GM12878 (cell line): ENCODE measurements at regions of chr11 and their contacts with region 1.

Region 1: DNA sequence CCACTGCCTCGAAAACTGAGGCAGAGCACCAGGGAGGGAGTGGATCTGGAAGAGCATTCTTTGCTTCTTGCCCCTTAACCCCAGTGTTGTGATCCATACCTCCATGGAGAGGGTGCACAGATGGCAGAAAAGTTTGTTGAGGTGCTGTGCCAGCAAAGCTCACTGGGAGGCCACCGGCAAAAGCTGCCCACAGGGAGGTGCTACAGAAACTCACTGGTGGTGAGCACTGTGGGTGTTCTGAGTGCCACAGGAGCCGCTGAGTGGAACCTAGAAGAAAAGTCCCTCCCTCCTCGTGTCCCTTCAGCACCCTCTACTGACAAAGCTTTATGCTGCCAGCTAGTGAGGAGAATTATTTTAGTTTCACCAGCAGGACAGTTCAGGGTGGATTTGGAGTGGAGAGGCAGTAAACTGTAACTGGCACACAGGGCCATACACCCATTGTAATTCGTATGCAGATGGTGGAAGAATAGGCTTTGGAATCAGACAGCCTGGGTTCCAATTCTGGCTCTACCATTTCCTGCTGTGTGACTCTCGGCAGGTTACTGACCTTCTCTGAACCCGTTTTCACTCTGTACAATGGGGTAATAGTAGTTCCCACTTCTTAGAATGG is 84.6 kb downstream of the SWAP70 start:
- DNase-seq: peak; percentile 72
- ATAC-seq: peak; percentile 90
- H3K4me3 ChIP-seq: no peak overlapping the region
- H3K27ac ChIP-seq: no peak overlapping the region
- H3K4me1 ChIP-seq: peaks cover 42% of the 10 kb centered on the region
- H3K27me3 ChIP-seq: no peaks in the 10 kb centered on the region
- CTCF ChIP-seq: peak; percentile 83 to 92 (median 91)
- EP300 ChIP-seq: no peak; a peak in 1 of 4 replicates
- POLR2A ChIP-seq: no peak
- RAD21 ChIP-seq: peak; percentile 97

Region 2: DNA sequence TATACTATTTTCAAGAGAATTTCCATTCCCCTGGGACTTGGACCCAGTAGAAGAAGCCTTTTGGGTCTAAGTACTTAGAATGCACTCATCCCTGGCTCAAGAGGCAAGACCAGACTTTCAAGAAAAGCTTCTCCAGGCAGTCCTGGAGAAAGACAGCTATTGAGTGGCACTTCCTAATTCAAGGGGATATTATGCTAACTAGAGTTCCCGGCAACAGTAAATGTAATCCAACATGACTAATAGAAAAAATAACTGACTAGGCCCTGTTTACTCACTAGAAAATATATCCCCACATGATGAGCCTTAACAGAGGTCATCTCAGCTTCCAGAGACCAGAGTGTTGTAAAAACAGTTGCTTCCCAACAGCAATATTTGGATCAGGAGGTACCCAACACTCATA is 884.6 kb before region 1 on chr11:
- CTCF ChIA-PET with region 1: no interaction called
- POLR2A ChIA-PET with region 1: no interaction called
- RAD21 ChIA-PET with region 1: no interaction called
- SMC1A ChIA-PET with region 1: no interaction called
- in situ Hi-C with region 1: no loop called
- intact Hi-C with region 1: no loop called
- DNase-seq: no peak
- ATAC-seq: no peak
- H3K4me3 ChIP-seq: no peak overlapping the region
- H3K27ac ChIP-seq: no peak overlapping the region
- H3K4me1 ChIP-seq: no peaks in the 10 kb centered on the region
- H3K27me3 ChIP-seq: no peaks in the 10 kb centered on the region
- CTCF ChIP-seq: no peak
- EP300 ChIP-seq: no peak
- POLR2A ChIP-seq: no peak
- RAD21 ChIP-seq: no peak

Region 3: DNA sequence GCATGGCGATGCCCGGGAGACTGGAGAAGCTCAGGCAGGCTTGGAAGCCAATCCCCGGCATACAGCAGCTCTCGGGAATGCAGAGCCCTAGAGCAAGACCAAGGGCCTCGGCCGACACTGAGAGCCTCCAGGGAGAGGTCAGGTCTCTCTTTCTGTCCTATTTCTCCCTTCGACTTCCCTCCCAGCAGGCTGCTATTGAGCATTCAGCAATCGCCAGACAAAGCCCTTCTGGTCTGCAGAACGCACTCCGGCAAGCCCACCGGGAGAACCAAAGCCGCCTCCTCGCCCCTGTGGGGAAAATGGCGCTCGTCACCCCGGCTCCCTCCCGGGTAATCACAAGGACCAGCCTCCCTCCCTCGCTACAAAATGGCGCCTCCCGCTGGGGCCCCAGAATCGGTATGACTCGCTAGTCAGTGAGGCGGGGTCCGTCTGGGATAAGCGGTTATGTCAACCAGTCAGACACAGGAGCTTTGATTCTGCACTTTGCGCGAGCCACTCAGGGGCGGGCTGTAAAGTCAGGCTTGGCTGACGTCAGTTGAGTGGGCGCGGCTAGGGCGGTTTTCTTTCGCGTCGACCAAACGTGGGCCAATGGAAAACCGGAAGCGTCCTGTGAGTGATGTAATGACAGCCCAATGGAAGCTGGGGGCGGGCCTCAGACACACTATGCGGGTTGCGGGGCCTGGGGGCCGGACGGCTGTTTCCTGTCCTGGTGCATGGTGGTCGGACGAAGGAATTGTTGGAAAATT is 288.0 kb before region 1 on chr11 and contains the start of gene ZNF143:
- CTCF ChIA-PET with region 1: interaction called, 5 read pairs
- POLR2A ChIA-PET with region 1: no interaction called
- RAD21 ChIA-PET with region 1: interaction called, 4 read pairs
- SMC1A ChIA-PET with region 1: no interaction called
- in situ Hi-C with region 1: no loop called
- intact Hi-C with region 1: loop called (anchors 5 kb)
- DNase-seq: peak; percentile 99
- ATAC-seq: peak; percentile 88
- H3K4me3 ChIP-seq: peak within 1 kb of the TSS; percentile 98
- H3K27ac ChIP-seq: peak within 1 kb of the TSS; percentile 100
- H3K4me1 ChIP-seq: peaks cover 7% of the 10 kb centered on the region
- H3K27me3 ChIP-seq: no peaks in the 10 kb centered on the region
- CTCF ChIP-seq: no peak
- EP300 ChIP-seq: peak in 1 of 2 experiments; percentile 9; a peak in 1 of 4 replicates
- POLR2A ChIP-seq: peak; percentile 90
- RAD21 ChIP-seq: no peak
- polyA plus RNA-seq, gene ZNF143: 16.1 to 18.3 TPM

Region 4: DNA sequence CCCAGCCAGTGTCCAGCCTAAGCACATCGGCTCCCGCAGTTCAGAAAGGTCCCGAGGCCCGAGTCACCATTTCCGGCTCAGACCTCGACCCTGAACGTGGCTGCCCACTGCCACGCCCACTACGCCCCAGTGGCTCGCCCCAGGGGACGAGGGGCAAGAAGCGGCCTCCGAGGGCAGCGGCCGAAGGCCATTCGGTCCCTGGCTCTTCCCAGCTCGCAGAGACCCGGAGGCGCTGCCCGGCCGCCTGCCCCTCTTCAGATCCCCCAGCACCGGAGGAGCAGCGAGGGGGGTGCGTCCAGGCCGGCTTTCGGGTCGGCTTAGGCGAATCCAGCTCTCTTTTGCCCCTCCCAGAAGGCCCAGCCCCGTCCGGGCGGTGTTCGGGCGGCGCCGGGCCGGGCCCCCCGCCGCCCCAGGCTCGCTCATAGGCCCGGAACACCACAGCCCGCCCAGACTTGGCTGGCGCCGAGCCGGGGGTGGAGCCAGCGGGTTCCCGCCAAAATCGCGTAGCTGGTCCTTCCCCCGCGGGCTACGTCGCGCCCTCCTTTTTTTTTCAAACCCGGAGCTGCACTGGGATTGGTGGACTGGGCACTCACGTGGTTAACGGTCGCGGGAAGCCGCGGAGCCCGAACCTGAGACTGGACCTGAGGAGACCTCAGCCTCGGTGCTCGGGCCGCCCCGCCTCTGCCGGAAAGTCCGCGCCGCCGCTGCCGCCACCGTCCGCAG is 175.3 kb before region 1 on chr11 and contains the start of gene WEE1:
- CTCF ChIA-PET with region 1: interaction called, 24 read pairs
- POLR2A ChIA-PET with region 1: no interaction called
- RAD21 ChIA-PET with region 1: interaction called, 7 read pairs
- SMC1A ChIA-PET with region 1: interaction called, 30 read pairs
- in situ Hi-C with region 1: no loop called
- intact Hi-C with region 1: loop called (anchors 2 kb)
- DNase-seq: peak; percentile 86
- ATAC-seq: peak; percentile 94
- H3K4me3 ChIP-seq: peak within 1 kb of the TSS; percentile 90
- H3K27ac ChIP-seq: peak within 1 kb of the TSS; percentile 90
- H3K4me1 ChIP-seq: peaks cover 6% of the 10 kb centered on the region; the same call in 1 of the 2 replicates
- H3K27me3 ChIP-seq: no peaks in the 10 kb centered on the region
- CTCF ChIP-seq: no peak
- EP300 ChIP-seq: no peak
- POLR2A ChIP-seq: peak; percentile 84
- RAD21 ChIP-seq: no peak
- polyA plus RNA-seq, gene WEE1: 20.6 to 22.2 TPM

Region 5: DNA sequence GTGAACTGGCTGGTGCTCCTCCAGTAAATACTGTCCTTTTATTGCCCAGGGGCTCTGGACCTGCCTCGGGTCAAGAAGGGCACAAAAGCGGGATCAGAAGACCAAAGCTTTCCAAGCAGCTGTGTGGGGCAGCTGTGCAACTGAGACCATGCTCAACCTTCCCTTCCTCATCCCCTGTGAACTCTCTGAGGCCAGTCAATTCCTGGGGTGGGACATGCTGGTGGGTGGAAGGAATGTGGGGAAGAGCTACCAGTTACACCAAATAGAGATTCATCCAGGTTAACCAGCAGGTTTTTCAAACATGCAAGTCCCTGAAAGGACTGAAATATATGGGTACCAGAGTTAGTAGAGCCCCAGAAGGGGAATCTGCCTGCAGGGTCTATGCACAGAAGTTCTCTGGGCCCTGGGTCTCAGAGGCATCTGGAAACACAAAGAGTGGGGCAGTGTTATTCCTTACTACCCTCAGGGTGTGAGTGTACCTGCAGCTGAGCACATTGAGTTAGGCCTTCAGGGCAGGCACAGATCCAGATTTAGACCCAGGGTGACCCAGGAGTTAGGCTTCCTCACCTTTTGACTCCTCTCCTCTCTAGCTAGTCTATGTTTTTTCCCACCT is 128.6 kb before region 1 on chr11:
- CTCF ChIA-PET with region 1: interaction called, 126 read pairs
- POLR2A ChIA-PET with region 1: no interaction called
- RAD21 ChIA-PET with region 1: interaction called, 10 read pairs
- SMC1A ChIA-PET with region 1: interaction called, 4 read pairs
- in situ Hi-C with region 1: no loop called
- intact Hi-C with region 1: no loop called
- DNase-seq: no peak
- ATAC-seq: no peak
- H3K4me3 ChIP-seq: no peak overlapping the region
- H3K27ac ChIP-seq: no peak overlapping the region
- H3K4me1 ChIP-seq: peaks cover 32% of the 10 kb centered on the region
- H3K27me3 ChIP-seq: no peaks in the 10 kb centered on the region
- CTCF ChIP-seq: no peak
- EP300 ChIP-seq: no peak
- POLR2A ChIP-seq: no peak
- RAD21 ChIP-seq: no peak

Region 6: DNA sequence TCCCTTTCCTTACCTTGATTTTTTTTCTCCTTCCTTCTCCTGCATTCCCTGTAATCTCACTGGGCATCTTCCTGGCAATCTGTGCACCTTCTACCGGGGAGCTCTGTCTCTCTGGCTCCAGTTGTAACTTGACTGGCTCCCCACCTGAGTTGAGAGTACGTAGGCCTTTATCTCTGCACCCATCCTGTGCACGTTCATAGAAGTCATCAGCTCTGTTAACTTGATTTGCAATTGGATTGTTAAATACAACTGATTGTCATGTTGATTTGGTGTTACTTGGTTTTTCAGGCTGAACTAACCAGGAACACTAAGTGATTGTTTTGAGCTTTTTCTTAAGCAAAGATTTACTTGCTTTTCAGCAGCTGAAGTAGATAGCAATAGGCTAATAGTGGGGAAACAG is 72.8 kb before region 1 on chr11:
- CTCF ChIA-PET with region 1: interaction called, 6 read pairs
- POLR2A ChIA-PET with region 1: no interaction called
- RAD21 ChIA-PET with region 1: interaction called, 7 read pairs
- SMC1A ChIA-PET with region 1: interaction called, 10 read pairs
- in situ Hi-C with region 1: no loop called
- intact Hi-C with region 1: no loop called
- DNase-seq: no peak
- ATAC-seq: peak; percentile 59
- H3K4me3 ChIP-seq: peak overlapping the region; percentile 46; the same call in 1 of the 2 replicates
- H3K27ac ChIP-seq: peak overlapping the region; percentile 11; the same call in 1 of the 2 replicates
- H3K4me1 ChIP-seq: peaks cover 14% of the 10 kb centered on the region
- H3K27me3 ChIP-seq: no peaks in the 10 kb centered on the region
- CTCF ChIP-seq: no peak
- EP300 ChIP-seq: no peak
- POLR2A ChIP-seq: no peak
- RAD21 ChIP-seq: no peak

Region 7: DNA sequence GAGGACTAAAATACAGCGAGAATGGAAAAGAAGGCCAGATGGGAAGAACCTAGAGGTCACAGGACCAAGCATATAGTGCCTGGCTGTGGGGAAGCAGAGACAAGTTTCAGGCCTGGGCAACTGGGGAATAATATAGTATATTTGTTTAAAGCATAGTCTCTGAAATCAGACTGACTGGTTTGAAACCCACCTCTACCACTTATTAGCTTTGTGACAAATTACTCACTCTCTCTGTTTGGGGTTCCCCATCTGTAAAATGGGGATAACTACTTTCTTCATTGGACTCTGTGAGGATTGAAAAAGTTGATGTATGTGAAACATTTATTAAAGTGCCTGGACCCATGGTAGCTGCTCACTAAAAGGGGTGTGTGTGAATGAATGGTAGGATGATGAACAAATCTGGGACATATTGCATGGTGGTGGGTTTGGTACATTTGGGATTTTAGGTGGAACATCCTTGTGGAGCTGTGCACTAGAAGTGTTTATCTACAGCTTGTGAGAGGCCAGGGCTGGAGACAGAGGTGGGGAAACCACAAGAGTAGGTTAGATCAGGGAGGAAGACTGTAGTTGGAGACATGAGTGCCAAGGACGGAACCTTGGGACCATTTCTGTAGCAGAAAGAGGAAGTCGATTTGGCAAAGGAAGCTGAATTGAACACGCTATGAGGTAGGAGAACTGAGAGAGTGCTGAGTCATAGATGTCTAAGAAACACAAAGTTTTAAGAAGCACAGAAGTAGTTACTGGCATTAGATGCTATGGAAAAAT is 32.0 kb before region 1 on chr11:
- CTCF ChIA-PET with region 1: interaction called, 15 read pairs
- POLR2A ChIA-PET with region 1: interaction called, 3 read pairs
- RAD21 ChIA-PET with region 1: interaction called, 6 read pairs
- SMC1A ChIA-PET with region 1: interaction called, 15 read pairs
- in situ Hi-C with region 1: no loop called
- intact Hi-C with region 1: no loop called
- DNase-seq: peak; percentile 92
- ATAC-seq: peak; percentile 90
- H3K4me3 ChIP-seq: no peak overlapping the region
- H3K27ac ChIP-seq: peak overlapping the region; percentile 65
- H3K4me1 ChIP-seq: peaks cover 58% of the 10 kb centered on the region
- H3K27me3 ChIP-seq: no peaks in the 10 kb centered on the region
- CTCF ChIP-seq: no peak
- EP300 ChIP-seq: peak in 1 of 2 experiments; percentile 87; a peak in 1 of 4 replicates
- POLR2A ChIP-seq: no peak
- RAD21 ChIP-seq: no peak

Region 8: DNA sequence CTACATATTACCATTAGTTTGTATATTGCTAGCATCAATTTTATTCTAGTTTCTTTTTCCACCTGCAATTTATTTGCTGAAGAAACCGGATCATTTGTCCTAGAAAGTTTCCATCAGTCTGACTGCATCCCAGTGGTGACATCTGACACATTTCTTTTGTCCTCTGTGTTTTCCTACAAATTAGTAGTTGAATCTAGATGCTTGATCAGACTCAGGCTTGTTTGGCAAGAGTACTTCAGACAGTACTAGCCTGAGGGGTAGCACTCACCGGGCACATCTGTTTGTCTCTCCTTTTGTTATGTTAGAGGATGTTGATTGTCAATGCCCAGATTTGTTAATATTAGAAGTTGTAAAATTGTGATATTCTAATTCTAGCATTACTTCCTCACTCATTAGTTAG is 120.2 kb after region 1 on chr11:
- CTCF ChIA-PET with region 1: no interaction called
- POLR2A ChIA-PET with region 1: no interaction called
- RAD21 ChIA-PET with region 1: no interaction called
- SMC1A ChIA-PET with region 1: no interaction called
- in situ Hi-C with region 1: no loop called
- intact Hi-C with region 1: no loop called
- DNase-seq: no peak
- ATAC-seq: no peak
- H3K4me3 ChIP-seq: no peak overlapping the region
- H3K27ac ChIP-seq: no peak overlapping the region
- H3K4me1 ChIP-seq: no peaks in the 10 kb centered on the region
- H3K27me3 ChIP-seq: no peaks in the 10 kb centered on the region
- CTCF ChIP-seq: no peak
- EP300 ChIP-seq: no peak
- POLR2A ChIP-seq: no peak
- RAD21 ChIP-seq: no peak

Region 9: GRCh38 chr11:10844356-10844755 is 1095.9 kb after region 1 on chr11:
- CTCF ChIA-PET with region 1: no interaction called
- POLR2A ChIA-PET with region 1: no interaction called
- RAD21 ChIA-PET with region 1: no interaction called
- SMC1A ChIA-PET with region 1: no interaction called
- in situ Hi-C with region 1: no loop called
- intact Hi-C with region 1: no loop called
- DNase-seq: no peak
- ATAC-seq: no peak
- H3K4me3 ChIP-seq: no peak overlapping the region
- H3K27ac ChIP-seq: no peak overlapping the region
- H3K4me1 ChIP-seq: no peaks in the 10 kb centered on the region
- H3K27me3 ChIP-seq: no peaks in the 10 kb centered on the region
- CTCF ChIP-seq: no peak
- EP300 ChIP-seq: no peak
- POLR2A ChIP-seq: no peak
- RAD21 ChIP-seq: no peak